B cell (primary cell): ENCODE measurements at regions of chr7 and their contacts with region 1.

Region 1: GRCh38 chr7:43869006-43869866 is at the start of gene MRPS24:
- DNase-seq: peak; percentile 95
- ATAC-seq: peak; percentile 100
- H3K4me3 ChIP-seq: peak within 1 kb of the TSS; percentile 17 to 91 (median 70)
- H3K4me3 Mint-ChIP-seq: peak within 1 kb of the TSS; percentile 91
- H3K27ac ChIP-seq: peak within 1 kb of the TSS; percentile 46 to 63
- H3K27ac Mint-ChIP-seq: peak within 1 kb of the TSS; percentile 84
- H3K4me1 ChIP-seq: peaks cover 15 to 19% of the 10 kb centered on the region in 2 donors
- H3K4me1 Mint-ChIP-seq: peaks cover 22% of the 10 kb centered on the region
- H3K27me3 ChIP-seq: no peaks in the 10 kb centered on the region
- H3K27me3 Mint-ChIP-seq: no peaks in the 10 kb centered on the region
- CTCF ChIP-seq: no peak
- total RNA-seq, gene MRPS24: 44.3 and 54.1 TPM in 2 replicates

Region 2: GRCh38 chr7:41881331-41882130 is 1987.7 kb before region 1 on chr7:
- CTCF ChIA-PET with region 1: no interaction called
- POLR2A ChIA-PET with region 1: no interaction called
- intact Hi-C with region 1: loop called (anchors 2 kb)
- DNase-seq: peak; percentile 96
- ATAC-seq: peak; percentile 89
- H3K4me3 ChIP-seq: peak overlapping the region in 1 of 5 experiments; percentile 41
- H3K4me3 Mint-ChIP-seq: peak overlapping the region; percentile 84
- H3K27ac ChIP-seq: peak overlapping the region; percentile 87 to 91
- H3K27ac Mint-ChIP-seq: peak overlapping the region; percentile 93
- H3K4me1 ChIP-seq: peaks cover 57 to 63% of the 10 kb centered on the region in 2 donors
- H3K4me1 Mint-ChIP-seq: peaks cover 71% of the 10 kb centered on the region
- H3K27me3 ChIP-seq: no peaks in the 10 kb centered on the region
- H3K27me3 Mint-ChIP-seq: no peaks in the 10 kb centered on the region
- CTCF ChIP-seq: no peak

Region 3: GRCh38 chr7:42931834-42932651 is 937.2 kb before region 1 on chr7 and contains the starts of genes MRPL32 and PSMA2:
- CTCF ChIA-PET with region 1: no interaction called
- POLR2A ChIA-PET with region 1: no interaction called
- intact Hi-C with region 1: loop called (anchors 1 kb)
- DNase-seq: peak; percentile 97
- ATAC-seq: peak; percentile 100
- H3K4me3 ChIP-seq: peak within 1 kb of the TSS; percentile 79 to 98 (median 90)
- H3K4me3 Mint-ChIP-seq: peak within 1 kb of the TSS; percentile 91
- H3K27ac ChIP-seq: peak within 1 kb of the TSS; percentile 77 to 88
- H3K27ac Mint-ChIP-seq: peak within 1 kb of the TSS; percentile 94
- H3K4me1 ChIP-seq: peaks cover 36 to 38% of the 10 kb centered on the region in 2 donors
- H3K4me1 Mint-ChIP-seq: peaks cover 67% of the 10 kb centered on the region
- H3K27me3 ChIP-seq: no peaks in the 10 kb centered on the region
- H3K27me3 Mint-ChIP-seq: no peaks in the 10 kb centered on the region
- CTCF ChIP-seq: no peak
- total RNA-seq, gene MRPL32: 31.7 and 34.2 TPM in 2 replicates
- total RNA-seq, gene PSMA2: 40.6 and 47.8 TPM in 2 replicates

Region 4: GRCh38 chr7:43729214-43729923 is 139.9 kb before region 1 on chr7 and contains the start of gene COA1:
- CTCF ChIA-PET with region 1: no interaction called
- POLR2A ChIA-PET with region 1: no interaction called
- intact Hi-C with region 1: loop called (anchors 1 kb)
- DNase-seq: peak; percentile 92
- ATAC-seq: peak; percentile 95
- H3K4me3 ChIP-seq: peak within 1 kb of the TSS; percentile 73 to 88 (median 84)
- H3K4me3 Mint-ChIP-seq: peak within 1 kb of the TSS; percentile 93
- H3K27ac ChIP-seq: peak within 1 kb of the TSS; percentile 40 to 71
- H3K27ac Mint-ChIP-seq: peak within 1 kb of the TSS; percentile 87
- H3K4me1 ChIP-seq: peaks cover 12 to 13% of the 10 kb centered on the region in 2 donors
- H3K4me1 Mint-ChIP-seq: peaks cover 36% of the 10 kb centered on the region
- H3K27me3 ChIP-seq: no peaks in the 10 kb centered on the region
- H3K27me3 Mint-ChIP-seq: no peaks in the 10 kb centered on the region
- CTCF ChIP-seq: peak; percentile 22
- total RNA-seq, gene COA1: 72.7 and 89.7 TPM in 2 replicates

Region 5: GRCh38 chr7:43906331-43907010 is 37.2 kb after region 1 on chr7 and contains the start of gene URGCP:
- CTCF ChIA-PET with region 1: no interaction called
- POLR2A ChIA-PET with region 1: interaction called, 4 read pairs
- intact Hi-C with region 1: loop called (anchors 2 kb)
- DNase-seq: peak; percentile 68
- ATAC-seq: peak; percentile 95
- H3K4me3 ChIP-seq: peak within 1 kb of the TSS; percentile 47 to 75 (median 57)
- H3K4me3 Mint-ChIP-seq: peak within 1 kb of the TSS; percentile 97
- H3K27ac ChIP-seq: peak within 1 kb of the TSS in 1 of 2 donors; percentile 54
- H3K27ac Mint-ChIP-seq: peak within 1 kb of the TSS; percentile 97
- H3K4me1 ChIP-seq: peaks cover 9 to 18% of the 10 kb centered on the region in 2 donors
- H3K4me1 Mint-ChIP-seq: peaks cover 30% of the 10 kb centered on the region
- H3K27me3 ChIP-seq: no peaks in the 10 kb centered on the region
- H3K27me3 Mint-ChIP-seq: no peaks in the 10 kb centered on the region
- CTCF ChIP-seq: no peak
- total RNA-seq, gene URGCP: 25.1 and 31.3 TPM in 2 replicates

Region 6: GRCh38 chr7:43925984-43926797 is 57.0 kb after region 1 on chr7 and contains the start of gene UBE2D4:
- CTCF ChIA-PET with region 1: no interaction called
- POLR2A ChIA-PET with region 1: interaction called, 6 read pairs
- intact Hi-C with region 1: loop called (anchors 1 kb)
- DNase-seq: peak; percentile 93
- ATAC-seq: peak; percentile 87
- H3K4me3 ChIP-seq: peak within 1 kb of the TSS; percentile 53 to 85 (median 72)
- H3K4me3 Mint-ChIP-seq: peak within 1 kb of the TSS; percentile 95
- H3K27ac ChIP-seq: peak within 1 kb of the TSS; percentile 87 to 94
- H3K27ac Mint-ChIP-seq: peak within 1 kb of the TSS; percentile 96
- H3K4me1 ChIP-seq: peaks cover 8 to 21% of the 10 kb centered on the region in 2 donors
- H3K4me1 Mint-ChIP-seq: peaks cover 18% of the 10 kb centered on the region
- H3K27me3 ChIP-seq: no peaks in the 10 kb centered on the region
- H3K27me3 Mint-ChIP-seq: no peaks in the 10 kb centered on the region
- CTCF ChIP-seq: no peak
- total RNA-seq, gene UBE2D4: 9.4 and 11.4 TPM in 2 replicates